Adrenal gland (tissue), 19 donors: ENCODE measurements at regions of chr6 and their contacts with region 1.

Region 1: GRCh38 chr6:109073344-109074132 is 21.1 kb downstream of the SESN1 start:
- DNase-seq: peak in 5 of 7 donors; percentile 38 to 60 (median 55)
- H3K4me3 ChIP-seq: no peak overlapping the region
- H3K27ac ChIP-seq: no peak overlapping the region
- H3K4me1 ChIP-seq: peaks cover 0 to 34% of the 10 kb centered on the region in 2 donors
- H3K27me3 ChIP-seq: no peaks in the 10 kb centered on the region
- CTCF ChIP-seq: peak; percentile 50 to 84 (median 72)
- POLR2A ChIP-seq: no peak

Region 2: GRCh38 chr6:108558372-108559096 is 515.0 kb before region 1 on chr6:
- intact Hi-C with region 1: loop called in 1 of 2 experiments (anchors 5 kb)
- DNase-seq: peak; percentile 98 to 99 (median 98)
- H3K4me3 ChIP-seq: peak overlapping the region; percentile 6 to 93 (median 70)
- H3K27ac ChIP-seq: peak overlapping the region; percentile 93 to 100 (median 99)
- H3K4me1 ChIP-seq: peaks cover 6 to 11% of the 10 kb centered on the region in 2 donors
- H3K27me3 ChIP-seq: no peaks in the 10 kb centered on the region
- CTCF ChIP-seq: peak in 1 of 6 experiments; percentile 25
- POLR2A ChIP-seq: peak; percentile 73 to 74

Region 3: DNA sequence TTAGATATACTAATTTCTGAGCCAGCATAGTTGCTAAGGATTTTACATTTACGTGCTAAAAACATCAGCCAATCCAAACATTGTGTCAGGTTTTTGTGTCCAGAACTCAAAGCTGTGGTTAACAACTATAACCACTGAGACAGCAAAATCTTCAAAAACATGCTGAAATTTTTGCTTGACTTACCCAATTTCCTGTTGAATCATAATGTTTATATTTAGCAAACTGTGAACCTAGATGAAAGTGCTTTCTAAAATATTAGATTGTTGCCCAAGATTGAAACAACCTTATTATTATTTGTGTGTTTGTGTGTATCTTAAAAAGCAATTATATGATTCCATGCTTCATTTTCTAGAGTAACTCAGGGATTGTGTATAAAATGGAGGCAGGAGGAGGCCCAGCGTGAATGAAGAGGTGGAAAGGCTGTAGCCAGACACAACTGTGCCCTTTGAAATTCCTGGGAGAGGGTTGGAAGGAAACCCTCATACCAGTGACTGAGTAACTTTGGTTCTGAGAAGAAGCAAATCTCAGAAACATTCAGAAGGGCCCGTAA is 177.4 kb before region 1 on chr6:
- intact Hi-C with region 1: loop called (anchors 10 kb)
- DNase-seq: no peak
- H3K4me3 ChIP-seq: no peak overlapping the region
- H3K27ac ChIP-seq: peak overlapping the region in 3 of 5 donors; percentile 32 to 79 (median 67)
- H3K4me1 ChIP-seq: peaks cover 8 to 35% of the 10 kb centered on the region in 2 donors
- H3K27me3 ChIP-seq: no peaks in the 10 kb centered on the region
- CTCF ChIP-seq: no peak
- POLR2A ChIP-seq: no peak

Region 4: DNA sequence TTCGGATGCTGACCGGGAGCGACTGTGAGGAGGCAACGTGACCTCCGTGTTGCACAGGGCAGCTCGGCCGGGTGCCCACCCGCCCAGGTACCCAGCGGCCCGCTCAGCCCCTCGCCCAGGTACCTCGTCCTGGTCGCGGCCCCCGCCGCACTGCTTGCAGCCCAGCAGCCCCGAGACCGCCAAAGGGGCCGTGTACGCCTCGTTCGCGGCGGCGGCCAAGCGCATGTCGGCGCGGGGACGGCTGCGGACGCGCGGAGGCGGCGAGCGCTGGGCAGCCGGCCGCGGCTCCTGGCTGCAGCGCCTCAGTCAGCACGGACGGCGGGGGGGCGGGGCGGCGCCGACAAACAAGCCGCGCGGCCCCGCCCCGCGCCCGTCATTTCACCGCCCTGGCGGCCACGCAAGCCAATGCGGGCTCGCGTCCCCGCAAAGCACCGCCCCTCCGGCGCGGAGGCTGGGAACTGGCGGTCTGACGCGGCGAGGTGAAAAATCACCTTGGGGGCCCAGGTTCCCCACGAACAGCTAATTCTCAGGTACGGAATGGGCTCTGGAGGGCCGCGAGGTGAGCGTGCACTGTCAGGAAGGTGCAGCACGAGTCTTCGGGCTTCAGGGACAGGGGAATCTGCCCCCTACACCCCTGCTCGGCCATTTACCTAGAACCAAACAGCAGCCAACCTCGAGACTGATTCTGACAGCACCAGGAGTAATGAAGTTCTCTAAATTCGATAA is 64.1 kb before region 1 on chr6:
- intact Hi-C with region 1: loop called (anchors 10 kb)
- DNase-seq: peak; percentile 91 to 98 (median 96)
- H3K4me3 ChIP-seq: peak overlapping the region; percentile 41 to 96 (median 52)
- H3K27ac ChIP-seq: peak overlapping the region; percentile 68 to 99 (median 95)
- H3K4me1 ChIP-seq: peaks cover 6 to 45% of the 10 kb centered on the region in 2 donors
- H3K27me3 ChIP-seq: no peaks in the 10 kb centered on the region
- CTCF ChIP-seq: peak in 4 of 6 experiments; percentile 29 to 77 (median 52)
- POLR2A ChIP-seq: peak; percentile 92 to 99